Ovary (tissue), 10 donors: ENCODE measurements at regions of chr17 and their contacts with region 1.

Region 1: GRCh38 chr17:68972119-68972704 is 17.0 kb upstream of the ABCA8 start:
- DNase-seq: peak in 2 of 5 donors; percentile 36 to 49
- H3K4me3 ChIP-seq: no peak overlapping the region
- H3K27ac ChIP-seq: no peak overlapping the region
- H3K4me1 ChIP-seq: peaks cover 5% of the 10 kb centered on the region
- H3K27me3 ChIP-seq: no peaks in the 10 kb centered on the region
- CTCF ChIP-seq: peak; percentile 56 to 87 (median 78)
- EP300 ChIP-seq: no peak
- POLR2A ChIP-seq: no peak

Region 2: GRCh38 chr17:68785565-68786524 is 186.4 kb before region 1 on chr17:
- intact Hi-C with region 1: loop called in 2 of 4 experiments (anchors 5 kb)
- DNase-seq: no peak
- H3K4me3 ChIP-seq: no peak overlapping the region
- H3K27ac ChIP-seq: no peak overlapping the region
- H3K4me1 ChIP-seq: peaks cover 10% of the 10 kb centered on the region
- H3K27me3 ChIP-seq: no peaks in the 10 kb centered on the region
- CTCF ChIP-seq: no peak
- EP300 ChIP-seq: no peak
- POLR2A ChIP-seq: no peak

Region 3: DNA sequence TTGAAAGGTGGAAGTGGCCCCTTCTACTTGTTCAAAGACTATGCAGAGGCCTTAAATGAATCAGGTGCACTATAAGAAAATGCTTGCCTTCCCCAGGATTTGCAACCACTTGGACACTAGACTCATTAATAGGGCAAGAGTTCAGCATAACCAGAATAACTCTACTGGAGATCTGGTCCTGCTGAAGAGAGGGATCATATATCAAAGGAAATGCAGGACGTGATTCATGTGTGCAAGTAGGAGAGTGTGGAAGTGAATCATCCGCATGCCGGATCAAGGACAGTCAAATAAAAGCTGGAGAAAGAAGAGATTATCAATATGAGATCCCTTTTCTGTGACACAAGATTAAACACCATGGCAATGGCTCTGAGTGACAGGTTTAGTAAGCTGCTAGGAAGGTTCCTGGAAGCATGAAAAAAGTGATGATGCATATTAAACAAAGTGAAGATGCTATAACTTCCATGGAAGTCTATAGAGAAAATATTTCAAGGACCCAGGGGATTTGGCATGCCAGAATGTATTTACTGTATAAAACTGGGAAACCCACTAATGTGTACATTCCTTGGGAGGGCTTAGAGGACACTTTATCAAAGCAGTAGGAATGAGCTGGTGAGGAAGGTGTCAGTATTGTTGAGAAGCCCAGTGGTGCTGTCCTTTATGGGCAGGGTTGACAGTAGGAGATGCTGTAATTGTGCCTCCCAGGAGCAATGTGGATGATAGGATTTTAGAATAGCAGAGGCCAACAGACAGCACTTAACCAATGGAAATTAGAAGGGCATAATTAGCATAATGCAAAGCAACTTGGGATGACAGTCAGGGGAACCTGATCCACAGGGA is 150.1 kb before region 1 on chr17:
- intact Hi-C with region 1: no loop called
- DNase-seq: no peak
- H3K4me3 ChIP-seq: no peak overlapping the region
- H3K27ac ChIP-seq: no peak overlapping the region
- H3K4me1 ChIP-seq: peaks cover 5% of the 10 kb centered on the region
- H3K27me3 ChIP-seq: no peaks in the 10 kb centered on the region
- CTCF ChIP-seq: no peak
- EP300 ChIP-seq: no peak
- POLR2A ChIP-seq: no peak